ENCODE measurements at regions of chr2 and their contacts with region 1.

Region 1: GRCh38 chr2:200713003-200713703 is 98.6 kb upstream of the BZW1 start:
- DNase-seq: peak; percentile 80 to 91 (median 90)
- ATAC-seq: peak; percentile 99
- H3K4me3 ChIP-seq: peak overlapping the region in 1 of 2 donors; percentile 25
- H3K27ac ChIP-seq: peak overlapping the region; percentile 78 to 80
- H3K4me1 ChIP-seq: peaks cover 0 to 3% of the 10 kb centered on the region in 2 donors
- H3K27me3 ChIP-seq: peaks cover 0 to 3% of the 10 kb centered on the region in 2 donors
- CTCF ChIP-seq: peak; percentile 55 to 61

Region 2: DNA sequence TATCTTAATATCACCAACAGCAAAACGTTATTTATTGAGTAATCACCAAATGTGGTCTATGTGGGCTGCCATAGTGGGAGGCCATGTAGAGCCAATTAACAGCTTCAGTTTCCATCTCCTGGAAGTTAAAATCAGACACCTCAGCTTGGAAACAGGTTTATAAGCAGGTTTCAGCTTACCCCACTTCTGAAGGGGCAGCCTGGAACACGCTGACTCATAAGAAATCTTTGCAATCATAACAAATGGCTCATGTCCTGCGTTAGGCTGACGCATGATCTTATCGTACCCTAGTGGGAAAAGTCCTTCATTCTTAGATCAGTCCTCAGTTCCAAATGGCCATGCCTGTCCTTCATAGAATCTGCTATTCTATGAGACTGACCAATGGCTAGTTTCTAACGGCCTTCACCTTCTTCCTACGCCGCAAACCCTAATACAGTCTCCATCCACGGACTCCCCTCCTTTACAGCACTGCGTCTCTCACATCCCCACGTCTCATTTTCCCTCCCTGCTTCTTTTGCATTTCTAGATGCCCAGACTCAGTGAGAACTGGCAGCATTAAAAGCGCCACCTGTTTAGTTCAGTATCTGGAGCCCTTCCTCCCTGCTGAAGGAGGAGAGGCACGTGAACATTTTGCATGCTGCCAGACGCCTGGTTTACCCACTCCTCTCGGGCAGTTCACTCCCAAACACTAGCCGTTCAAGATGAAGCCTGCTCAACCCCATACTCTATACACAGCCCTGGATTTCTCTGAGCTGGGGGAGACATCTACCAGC is 74.4 kb after region 1 on chr2:
- intact Hi-C with region 1: no loop called
- DNase-seq: peak in 1 of 4 donors; percentile 24
- ATAC-seq: peak; percentile 71
- H3K4me3 ChIP-seq: no peak overlapping the region
- H3K27ac ChIP-seq: peak overlapping the region; percentile 18 to 23
- H3K4me1 ChIP-seq: no peaks in the 10 kb centered on the region
- H3K27me3 ChIP-seq: no peaks in the 10 kb centered on the region
- CTCF ChIP-seq: no peak

Region 3: GRCh38 chr2:200811336-200812121 is 98.4 kb after region 1 on chr2 and contains the start of gene BZW1:
- intact Hi-C with region 1: loop called in 1 of 2 experiments (anchors 10 kb)
- DNase-seq: peak; percentile 97 to 99 (median 98)
- ATAC-seq: peak; percentile 91
- H3K4me3 ChIP-seq: peak within 1 kb of the TSS; percentile 94 to 98
- H3K27ac ChIP-seq: peak within 1 kb of the TSS; percentile 98 to 100
- H3K4me1 ChIP-seq: peaks cover 5 to 44% of the 10 kb centered on the region in 2 donors
- H3K27me3 ChIP-seq: no peaks in the 10 kb centered on the region
- CTCF ChIP-seq: no peak
- polyA plus RNA-seq, gene BZW1: 207 to 255 (median 230) TPM

Region 4: GRCh38 chr2:201203916-201204654 is 490.9 kb after region 1 on chr2:
- intact Hi-C with region 1: no loop called
- DNase-seq: peak in 2 of 4 donors; percentile 42 to 73
- ATAC-seq: peak; percentile 53
- H3K4me3 ChIP-seq: no peak overlapping the region
- H3K27ac ChIP-seq: peak overlapping the region in 1 of 2 donors; percentile 3
- H3K4me1 ChIP-seq: peaks cover 5 to 42% of the 10 kb centered on the region in 2 donors
- H3K27me3 ChIP-seq: no peaks in the 10 kb centered on the region
- CTCF ChIP-seq: no peak

Measured in left lung (tissue), 14 donors.